ENCODE measurements at regions of chr1 and their contacts with region 1.

Region 1: GRCh38 chr1:224149713-224150112 is 33.3 kb upstream of the DEGS1 start:
- DNase-seq: no peak
- H3K4me3 Mint-ChIP-seq: no peak overlapping the region
- H3K27ac Mint-ChIP-seq: no peak overlapping the region
- H3K4me1 Mint-ChIP-seq: peaks cover 19% of the 10 kb centered on the region
- H3K27me3 Mint-ChIP-seq: no peaks in the 10 kb centered on the region

Region 2: GRCh38 chr1:224168859-224169380 is 19.2 kb after region 1 on chr1:
- CTCF ChIA-PET with region 1: interaction called, 10 read pairs
- POLR2A ChIA-PET with region 1: interaction called, 5 read pairs
- DNase-seq: peak; percentile 59
- H3K4me3 Mint-ChIP-seq: peak overlapping the region; percentile 35
- H3K27ac Mint-ChIP-seq: peak overlapping the region; percentile 46
- H3K4me1 Mint-ChIP-seq: peaks cover 36% of the 10 kb centered on the region
- H3K27me3 Mint-ChIP-seq: peaks cover 9% of the 10 kb centered on the region

Measured in activated CD4-positive, alpha-beta T cell treated with anti-CD3 and anti-CD28 coated beads, Interleukin-2, amount 10 ng/mL, durations not matched to agents 7 days and 5 days (primary cell).